ENCODE measurements at regions of chr1 and their contacts with region 1.

Region 1: GRCh38 chr1:212990276-212990675 is 25.4 kb downstream of the ANGEL2 start:
- DNase-seq: no peak
- ATAC-seq: no peak
- H3K4me3 ChIP-seq: no peak overlapping the region
- H3K4me3 Mint-ChIP-seq: no peak overlapping the region
- H3K27ac ChIP-seq: no peak overlapping the region
- H3K27ac Mint-ChIP-seq: peak overlapping the region in 1 of 2 donors; percentile 67
- H3K4me1 ChIP-seq: no peaks in the 10 kb centered on the region
- H3K4me1 Mint-ChIP-seq: peaks cover 0 to 6% of the 10 kb centered on the region in 2 donors
- H3K27me3 ChIP-seq: no peaks in the 10 kb centered on the region
- H3K27me3 Mint-ChIP-seq: no peaks in the 10 kb centered on the region
- CTCF ChIP-seq: no peak

Region 2: GRCh38 chr1:212455803-212456528 is 534.3 kb before region 1 on chr1:
- intact Hi-C with region 1: loop called (anchors 2 kb)
- DNase-seq: peak; percentile 80 to 88
- ATAC-seq: peak; percentile 77 to 90 (median 89)
- H3K4me3 ChIP-seq: no peak overlapping the region
- H3K4me3 Mint-ChIP-seq: no peak overlapping the region
- H3K27ac ChIP-seq: no peak overlapping the region
- H3K27ac Mint-ChIP-seq: no peak overlapping the region
- H3K4me1 ChIP-seq: peaks cover 3% of the 10 kb centered on the region
- H3K4me1 Mint-ChIP-seq: peaks cover 0 to 12% of the 10 kb centered on the region in 2 donors
- H3K27me3 ChIP-seq: no peaks in the 10 kb centered on the region
- H3K27me3 Mint-ChIP-seq: no peaks in the 10 kb centered on the region
- CTCF ChIP-seq: peak; percentile 95

Region 3: GRCh38 chr1:212477014-212477679 is 513.1 kb before region 1 on chr1:
- intact Hi-C with region 1: loop called (anchors 2 kb)
- DNase-seq: peak; percentile 66 to 89
- ATAC-seq: peak; percentile 79 to 87 (median 81)
- H3K4me3 ChIP-seq: no peak overlapping the region
- H3K4me3 Mint-ChIP-seq: no peak overlapping the region
- H3K27ac ChIP-seq: no peak overlapping the region
- H3K27ac Mint-ChIP-seq: peak overlapping the region in 1 of 2 donors; percentile 73
- H3K4me1 ChIP-seq: peaks cover 36% of the 10 kb centered on the region
- H3K4me1 Mint-ChIP-seq: peaks cover 33 to 46% of the 10 kb centered on the region in 2 donors
- H3K27me3 ChIP-seq: no peaks in the 10 kb centered on the region
- H3K27me3 Mint-ChIP-seq: peaks cover 9 to 15% of the 10 kb centered on the region in 2 donors
- CTCF ChIP-seq: peak; percentile 86

Region 4: GRCh38 chr1:212665241-212666115 is 324.8 kb before region 1 on chr1:
- intact Hi-C with region 1: loop called (anchors 1 kb)
- DNase-seq: peak; percentile 78 to 88
- ATAC-seq: peak; percentile 94 to 97 (median 94)
- H3K4me3 ChIP-seq: peak overlapping the region; percentile 33
- H3K4me3 Mint-ChIP-seq: peak overlapping the region; percentile 74
- H3K27ac ChIP-seq: no peak overlapping the region
- H3K27ac Mint-ChIP-seq: peak overlapping the region in 1 of 2 donors; percentile 57
- H3K4me1 ChIP-seq: peaks cover 26% of the 10 kb centered on the region
- H3K4me1 Mint-ChIP-seq: peaks cover 17 to 20% of the 10 kb centered on the region in 2 donors
- H3K27me3 ChIP-seq: no peaks in the 10 kb centered on the region
- H3K27me3 Mint-ChIP-seq: peaks cover 18 to 29% of the 10 kb centered on the region in 2 donors
- CTCF ChIP-seq: peak; percentile 97

Region 5: GRCh38 chr1:212749821-212750535 is 240.3 kb before region 1 on chr1:
- intact Hi-C with region 1: loop called (anchors 10 kb)
- DNase-seq: peak in 1 of 2 donors; percentile 65
- ATAC-seq: peak; percentile 38 to 64 (median 63)
- H3K4me3 ChIP-seq: no peak overlapping the region
- H3K4me3 Mint-ChIP-seq: no peak overlapping the region
- H3K27ac ChIP-seq: no peak overlapping the region
- H3K27ac Mint-ChIP-seq: peak overlapping the region in 1 of 2 donors; percentile 60
- H3K4me1 ChIP-seq: peaks cover 19% of the 10 kb centered on the region
- H3K4me1 Mint-ChIP-seq: peaks cover 18 to 32% of the 10 kb centered on the region in 2 donors
- H3K27me3 ChIP-seq: no peaks in the 10 kb centered on the region
- H3K27me3 Mint-ChIP-seq: no peaks in the 10 kb centered on the region
- CTCF ChIP-seq: peak; percentile 79

Region 6: GRCh38 chr1:212814537-212815334 is 175.5 kb before region 1 on chr1:
- intact Hi-C with region 1: loop called (anchors 2 kb)
- DNase-seq: peak in 1 of 2 donors; percentile 38
- ATAC-seq: no peak
- H3K4me3 ChIP-seq: no peak overlapping the region
- H3K4me3 Mint-ChIP-seq: no peak overlapping the region
- H3K27ac ChIP-seq: no peak overlapping the region
- H3K27ac Mint-ChIP-seq: no peak overlapping the region
- H3K4me1 ChIP-seq: no peaks in the 10 kb centered on the region
- H3K4me1 Mint-ChIP-seq: peaks cover 0 to 4% of the 10 kb centered on the region in 2 donors
- H3K27me3 ChIP-seq: no peaks in the 10 kb centered on the region
- H3K27me3 Mint-ChIP-seq: peaks cover 0 to 3% of the 10 kb centered on the region in 2 donors
- CTCF ChIP-seq: no peak

Region 7: GRCh38 chr1:213303286-213303685 is 313.0 kb after region 1 on chr1:
- intact Hi-C with region 1: no loop called
- DNase-seq: no peak
- ATAC-seq: no peak
- H3K4me3 ChIP-seq: no peak overlapping the region
- H3K4me3 Mint-ChIP-seq: no peak overlapping the region
- H3K27ac ChIP-seq: no peak overlapping the region
- H3K27ac Mint-ChIP-seq: no peak overlapping the region
- H3K4me1 ChIP-seq: no peaks in the 10 kb centered on the region
- H3K4me1 Mint-ChIP-seq: no peaks in the 10 kb centered on the region
- H3K27me3 ChIP-seq: peaks cover 2% of the 10 kb centered on the region
- H3K27me3 Mint-ChIP-seq: no peaks in the 10 kb centered on the region
- CTCF ChIP-seq: no peak